ENCODE measurements at regions of chr1 and their contacts with region 1.

Region 1: GRCh38 chr1:26677306-26678115 is 18.3 kb upstream of the ARID1A start:
- DNase-seq: peak; percentile 84
- ATAC-seq: peak; percentile 95

Region 2: DNA sequence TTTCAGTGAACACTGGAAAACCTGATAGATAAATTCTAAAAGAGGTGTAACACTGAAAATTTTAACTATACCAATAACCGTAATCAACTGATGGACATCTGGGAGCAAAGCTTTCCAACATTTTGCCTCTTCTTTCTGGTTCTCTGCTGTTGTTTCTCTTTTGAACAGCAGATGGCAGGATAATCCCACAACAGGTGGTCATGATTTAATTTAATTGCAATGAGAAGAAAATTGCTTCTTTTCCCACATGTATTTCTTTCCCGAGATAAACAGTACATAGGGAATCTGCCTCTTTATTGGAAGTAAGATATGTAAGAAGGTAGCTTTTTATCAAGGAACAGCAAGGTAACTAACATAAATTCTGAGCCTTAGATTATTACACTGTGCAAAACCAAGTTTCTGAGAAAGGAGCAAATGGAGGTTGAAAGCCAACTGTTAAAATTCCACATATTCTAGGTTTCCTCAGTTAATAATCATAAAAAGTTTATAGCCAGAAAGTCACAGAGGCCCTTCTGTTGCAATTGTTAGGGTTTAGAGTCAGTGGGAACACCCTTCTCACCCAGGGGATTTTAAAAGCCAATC is 75.0 kb before region 1 on chr1:
- intact Hi-C with region 1: loop called (anchors 1 kb)
- DNase-seq: no peak
- ATAC-seq: no peak